AG04450 (cell line): ENCODE measurements at regions of chr10 and their contacts with region 1.

Region 1: DNA sequence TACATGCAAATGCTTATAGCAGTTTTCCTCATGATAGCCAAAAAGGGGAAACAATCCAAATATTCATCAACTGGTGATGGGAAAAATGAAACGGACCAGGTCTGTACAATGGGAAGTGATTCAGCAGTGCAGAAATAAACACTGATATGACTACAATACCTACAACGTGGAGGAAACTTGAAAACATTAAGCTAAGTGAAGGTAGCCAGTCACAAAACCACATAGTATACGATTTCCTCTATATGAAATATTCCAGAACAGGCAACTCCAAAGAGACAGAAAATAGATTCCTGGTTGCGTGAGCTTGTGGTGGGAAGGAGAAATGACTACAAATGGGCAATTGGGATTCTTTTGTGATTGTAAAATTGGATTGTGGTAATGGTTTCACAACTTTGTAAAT is 263.1 kb upstream of the PITRM1 start:
- DNase-seq: no peak
- H3K4me3 ChIP-seq: no peak overlapping the region
- H3K27ac ChIP-seq: no peak overlapping the region
- H3K27me3 ChIP-seq: no peaks in the 10 kb centered on the region
- CTCF ChIP-seq: no peak

Region 2: GRCh38 chr10:3226960-3227744 is 208.5 kb before region 1 on chr10:
- CTCF ChIA-PET with region 1: no interaction called
- POLR2A ChIA-PET with region 1: interaction called, 12 read pairs
- DNase-seq: no peak
- H3K4me3 ChIP-seq: no peak overlapping the region
- H3K27ac ChIP-seq: peak overlapping the region; percentile 12
- H3K27me3 ChIP-seq: no peaks in the 10 kb centered on the region
- CTCF ChIP-seq: no peak

Region 3: DNA sequence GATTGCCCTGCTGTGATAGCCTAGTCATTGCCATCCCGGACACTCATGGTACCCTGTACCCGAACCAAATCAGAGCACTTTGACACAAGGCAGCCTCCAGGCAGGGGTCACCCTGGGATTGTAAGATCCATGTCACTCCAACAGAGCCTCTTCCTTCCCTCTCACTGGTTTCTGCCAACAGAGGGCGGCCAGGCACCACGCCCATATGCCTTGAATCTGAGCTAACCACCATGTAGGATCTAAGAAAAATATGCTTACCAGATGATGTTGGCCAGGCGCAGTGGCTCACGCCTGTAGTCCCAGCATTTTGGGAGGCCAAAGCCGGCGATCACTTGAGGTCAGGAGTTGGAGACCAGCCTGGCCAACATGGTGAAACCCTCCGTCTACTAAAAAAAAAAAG is 738.5 kb after region 1 on chr10:
- CTCF ChIA-PET with region 1: no interaction called
- POLR2A ChIA-PET with region 1: no interaction called
- DNase-seq: no peak
- H3K4me3 ChIP-seq: no peak overlapping the region
- H3K27ac ChIP-seq: no peak overlapping the region
- H3K27me3 ChIP-seq: no peaks in the 10 kb centered on the region
- CTCF ChIP-seq: no peak